ENCODE measurements at regions of chr2 and their contacts with region 1.

Region 1: DNA sequence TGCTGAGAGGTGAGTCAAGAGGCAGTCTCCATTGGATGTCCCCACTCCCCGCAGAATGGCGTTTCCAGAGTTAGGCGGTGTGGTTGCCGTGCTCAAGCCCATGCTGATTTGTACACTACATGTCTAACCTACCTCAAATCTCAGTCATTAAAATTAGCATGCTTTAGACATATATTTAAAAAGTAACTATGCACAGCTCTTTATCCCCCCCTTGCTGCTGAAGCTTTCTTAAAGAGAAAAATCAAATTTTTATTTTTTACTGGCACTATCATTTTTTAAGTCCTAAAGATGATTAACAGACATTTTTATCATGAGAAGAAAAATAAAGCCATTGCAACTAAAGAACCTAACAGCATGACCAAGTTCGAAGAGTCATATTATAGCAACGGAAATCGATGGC is 42.9 kb downstream of the BOLA3 start:
- DNase-seq: peak in 1 of 2 donors; percentile 32
- ATAC-seq: peak in 1 of 3 donors; percentile 60
- H3K4me3 ChIP-seq: no peak overlapping the region
- H3K4me3 Mint-ChIP-seq: no peak overlapping the region
- H3K27ac ChIP-seq: no peak overlapping the region
- H3K27ac Mint-ChIP-seq: no peak overlapping the region
- H3K4me1 ChIP-seq: peaks cover 8% of the 10 kb centered on the region
- H3K4me1 Mint-ChIP-seq: peaks cover 14 to 22% of the 10 kb centered on the region in 2 donors
- H3K27me3 ChIP-seq: no peaks in the 10 kb centered on the region
- H3K27me3 Mint-ChIP-seq: no peaks in the 10 kb centered on the region
- CTCF ChIP-seq: peak; percentile 34

Region 2: GRCh38 chr2:73907840-73908452 is 196.9 kb before region 1 on chr2:
- intact Hi-C with region 1: loop called (anchors 1 kb)
- DNase-seq: peak; percentile 24 to 79
- ATAC-seq: peak; percentile 52 to 78 (median 76)
- H3K4me3 ChIP-seq: no peak overlapping the region
- H3K4me3 Mint-ChIP-seq: no peak overlapping the region
- H3K27ac ChIP-seq: no peak overlapping the region
- H3K27ac Mint-ChIP-seq: no peak overlapping the region
- H3K4me1 ChIP-seq: no peaks in the 10 kb centered on the region
- H3K4me1 Mint-ChIP-seq: no peaks in the 10 kb centered on the region
- H3K27me3 ChIP-seq: no peaks in the 10 kb centered on the region
- H3K27me3 Mint-ChIP-seq: no peaks in the 10 kb centered on the region
- CTCF ChIP-seq: no peak

Measured in natural killer cell (primary cell).